IMR-90 (cell line): ENCODE measurements at regions of chr1 and their contacts with region 1.

Region 1: DNA sequence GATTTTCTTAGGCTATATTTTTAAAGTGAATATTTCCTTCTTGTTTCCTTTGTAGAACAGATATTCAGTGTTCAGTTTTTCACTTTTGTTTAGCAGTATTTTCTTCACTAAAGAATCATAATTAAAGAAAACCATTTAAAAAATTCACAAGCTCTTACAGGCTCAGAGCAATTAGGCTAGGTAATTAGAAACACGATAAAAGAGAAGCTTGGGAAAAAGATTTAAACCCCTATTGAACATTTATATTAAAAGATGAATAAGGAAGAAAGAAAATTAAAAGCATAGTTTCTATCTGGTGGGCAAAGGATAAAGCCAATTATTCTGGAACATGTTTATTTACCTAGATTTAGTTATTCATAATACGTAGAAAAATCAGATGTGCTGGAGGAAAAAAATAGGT is 942.6 kb downstream of the PLA2G4A start:
- DNase-seq: no peak
- ATAC-seq: no peak
- H3K4me3 ChIP-seq: no peak overlapping the region
- H3K27ac ChIP-seq: no peak overlapping the region
- H3K4me1 ChIP-seq: no peaks in the 10 kb centered on the region
- H3K27me3 ChIP-seq: no peaks in the 10 kb centered on the region
- CTCF ChIP-seq: no peak
- POLR2A ChIP-seq: no peak
- RAD21 ChIP-seq: no peak

Region 2: DNA sequence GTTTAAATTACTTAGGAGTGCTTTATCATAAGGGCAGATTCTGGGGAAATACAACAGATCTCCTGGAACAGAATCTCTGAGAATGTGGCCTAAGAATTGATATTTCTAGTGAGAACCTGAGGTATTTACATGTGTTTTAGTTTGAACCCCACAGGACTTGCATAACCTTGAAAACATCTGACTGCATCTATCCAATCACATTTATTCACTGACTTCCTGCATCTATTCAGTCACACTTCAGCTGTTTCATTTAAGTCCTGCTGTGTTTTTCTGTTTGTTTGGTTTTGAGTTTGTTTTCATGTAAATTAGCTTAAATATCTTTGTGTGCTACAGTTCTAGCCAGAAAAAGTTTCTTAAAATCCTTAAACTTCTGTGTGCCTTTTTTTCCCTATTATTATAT is 318.1 kb after region 1 on chr1:
- CTCF ChIA-PET with region 1: no interaction called
- POLR2A ChIA-PET with region 1: interaction called, 12 read pairs
- dilution Hi-C with region 1: no loop called
- in situ Hi-C with region 1: no loop called
- intact Hi-C with region 1: no loop called
- DNase-seq: peak; percentile 11
- ATAC-seq: no peak
- H3K4me3 ChIP-seq: no peak overlapping the region
- H3K27ac ChIP-seq: peak overlapping the region; percentile 60; the same call in 1 of the 2 replicates
- H3K4me1 ChIP-seq: peaks cover 6% of the 10 kb centered on the region
- H3K27me3 ChIP-seq: no peaks in the 10 kb centered on the region
- CTCF ChIP-seq: no peak
- POLR2A ChIP-seq: no peak
- RAD21 ChIP-seq: no peak